WTC11 (cell line): ENCODE measurements at regions of chr12 and their contacts with region 1.

Region 1: DNA sequence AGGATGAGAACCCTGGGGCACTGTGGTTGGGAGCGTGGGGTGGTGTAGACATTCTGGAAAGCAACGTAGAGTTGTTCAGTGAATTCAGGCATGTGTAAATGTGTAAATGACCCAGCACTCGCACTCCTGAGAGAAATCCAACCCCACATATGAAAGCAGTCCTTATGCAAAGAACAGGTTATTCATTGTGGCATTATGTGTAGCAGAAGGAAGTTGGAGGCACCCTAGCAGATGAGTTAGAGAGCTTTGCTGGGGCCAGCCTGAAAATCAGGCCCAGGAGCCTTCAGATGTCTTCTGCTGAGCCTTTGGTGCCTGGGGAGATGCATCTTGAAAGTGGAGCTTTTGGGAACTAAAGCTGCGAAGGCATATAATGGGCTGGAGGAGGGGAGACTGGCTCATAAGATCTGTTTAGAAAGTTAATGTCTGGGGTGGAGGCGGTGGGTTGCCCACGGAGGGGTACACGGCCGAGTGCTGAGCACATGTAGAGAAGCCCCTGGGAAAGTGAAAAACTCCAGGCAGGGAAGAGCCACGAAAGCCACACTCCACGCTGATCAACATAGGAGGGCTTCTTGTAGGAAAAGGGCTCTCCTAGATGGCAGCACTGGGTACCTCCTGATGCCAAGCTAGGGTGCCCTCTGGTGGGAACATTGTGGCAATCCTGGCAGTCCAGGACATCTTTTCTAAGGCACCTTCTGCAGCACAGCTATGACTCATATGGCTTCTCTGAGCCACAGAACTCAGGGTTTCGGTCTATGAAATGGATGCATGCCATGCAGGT is 6.0 kb upstream of the KRT83 start:
- DNase-seq: peak; percentile 78
- ATAC-seq: peak; percentile 98
- H3K4me3 Mint-ChIP-seq: no peak overlapping the region
- H3K27ac Mint-ChIP-seq: no peak overlapping the region
- H3K4me1 Mint-ChIP-seq: peaks cover 4% of the 10 kb centered on the region; the same call in 1 of the 2 replicates
- H3K27me3 Mint-ChIP-seq: no peaks in the 10 kb centered on the region; the same call in 1 of the 2 replicates
- CTCF ChIP-seq: peak; percentile 26; the same call in 1 of the 2 replicates

Region 2: DNA sequence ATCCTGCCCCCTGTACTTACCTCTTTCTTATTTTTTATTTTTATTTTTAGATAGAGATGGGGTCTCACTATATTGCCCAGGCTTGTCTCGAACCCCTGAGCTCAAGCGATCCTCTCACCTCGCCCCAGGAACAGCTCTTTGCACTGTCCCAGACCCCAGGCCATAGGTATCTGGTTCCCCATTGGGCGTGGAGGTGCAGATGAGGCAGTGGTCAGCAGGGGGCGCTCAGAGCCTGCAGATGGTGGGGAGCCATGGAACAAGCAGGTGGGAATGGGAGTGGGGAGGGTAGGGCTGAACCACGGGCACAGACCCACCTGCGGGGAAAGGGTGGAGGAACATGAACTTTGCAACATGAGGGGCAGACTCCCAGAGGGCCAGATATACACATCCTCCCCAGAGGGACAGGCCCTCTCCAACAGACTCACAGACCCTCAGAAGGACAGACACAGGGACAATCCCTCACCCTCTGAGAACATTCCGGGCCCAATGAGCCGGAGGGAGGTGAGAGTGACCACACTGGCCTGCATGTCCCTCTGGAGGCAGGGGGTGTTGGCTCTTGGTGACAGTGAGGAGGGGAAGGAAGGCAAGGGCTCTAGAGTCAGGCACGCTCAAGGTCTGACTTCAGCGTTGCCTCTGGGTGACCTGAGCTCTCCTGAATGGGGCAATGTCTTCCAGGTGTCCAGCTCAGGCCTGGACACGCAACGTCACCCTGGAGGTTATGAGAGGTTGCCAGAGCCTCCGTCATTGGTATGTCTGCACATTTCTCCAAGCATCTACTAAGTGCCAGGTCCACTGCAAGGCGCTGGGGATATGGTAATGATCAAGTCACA is 170.3 kb before region 1 on chr12:
- CTCF ChIA-PET with region 1: interaction called, 48 read pairs
- POLR2A ChIA-PET with region 1: no interaction called
- DNase-seq: peak; percentile 94
- ATAC-seq: peak; percentile 88
- H3K4me3 Mint-ChIP-seq: no peak overlapping the region
- H3K27ac Mint-ChIP-seq: no peak overlapping the region
- H3K4me1 Mint-ChIP-seq: no peaks in the 10 kb centered on the region
- H3K27me3 Mint-ChIP-seq: no peaks in the 10 kb centered on the region
- CTCF ChIP-seq: peak; percentile 97

Region 3: GRCh38 chr12:52249051-52249461 is 78.2 kb before region 1 on chr12:
- CTCF ChIA-PET with region 1: interaction called, 13 read pairs
- POLR2A ChIA-PET with region 1: no interaction called
- DNase-seq: no peak
- ATAC-seq: no peak
- H3K4me3 Mint-ChIP-seq: no peak overlapping the region
- H3K27ac Mint-ChIP-seq: no peak overlapping the region
- H3K4me1 Mint-ChIP-seq: peaks cover 43% of the 10 kb centered on the region
- H3K27me3 Mint-ChIP-seq: peaks cover 38% of the 10 kb centered on the region
- CTCF ChIP-seq: no peak

Region 4: GRCh38 chr12:52338241-52338960 is 11.2 kb after region 1 on chr12:
- CTCF ChIA-PET with region 1: interaction called, 14 read pairs
- POLR2A ChIA-PET with region 1: no interaction called
- DNase-seq: no peak
- ATAC-seq: no peak
- H3K4me3 Mint-ChIP-seq: no peak overlapping the region
- H3K27ac Mint-ChIP-seq: no peak overlapping the region
- H3K4me1 Mint-ChIP-seq: peaks cover 7% of the 10 kb centered on the region
- H3K27me3 Mint-ChIP-seq: no peaks in the 10 kb centered on the region; the same call in 1 of the 2 replicates
- CTCF ChIP-seq: no peak

Region 5: GRCh38 chr12:52362118-52362726 is 35.0 kb after region 1 on chr12:
- CTCF ChIA-PET with region 1: interaction called, 12 read pairs
- POLR2A ChIA-PET with region 1: no interaction called
- DNase-seq: peak; percentile 57
- ATAC-seq: peak; percentile 26; the same call in 1 of the 2 replicates
- H3K4me3 Mint-ChIP-seq: no peak overlapping the region
- H3K27ac Mint-ChIP-seq: no peak overlapping the region
- H3K4me1 Mint-ChIP-seq: peaks cover 15% of the 10 kb centered on the region; the same call in 1 of the 2 replicates
- H3K27me3 Mint-ChIP-seq: no peaks in the 10 kb centered on the region
- CTCF ChIP-seq: peak; percentile 31; the same call in 1 of the 2 replicates

Region 6: GRCh38 chr12:52461691-52462090 is 134.4 kb after region 1 on chr12:
- CTCF ChIA-PET with region 1: no interaction called
- POLR2A ChIA-PET with region 1: no interaction called
- DNase-seq: no peak
- ATAC-seq: no peak; the same call in 1 of the 2 replicates
- H3K4me3 Mint-ChIP-seq: no peak overlapping the region
- H3K27ac Mint-ChIP-seq: no peak overlapping the region
- H3K4me1 Mint-ChIP-seq: no peaks in the 10 kb centered on the region
- H3K27me3 Mint-ChIP-seq: no peaks in the 10 kb centered on the region; the same call in 1 of the 2 replicates
- CTCF ChIP-seq: no peak